ENCODE measurements at regions of chr2 and their contacts with region 1.

Region 1: DNA sequence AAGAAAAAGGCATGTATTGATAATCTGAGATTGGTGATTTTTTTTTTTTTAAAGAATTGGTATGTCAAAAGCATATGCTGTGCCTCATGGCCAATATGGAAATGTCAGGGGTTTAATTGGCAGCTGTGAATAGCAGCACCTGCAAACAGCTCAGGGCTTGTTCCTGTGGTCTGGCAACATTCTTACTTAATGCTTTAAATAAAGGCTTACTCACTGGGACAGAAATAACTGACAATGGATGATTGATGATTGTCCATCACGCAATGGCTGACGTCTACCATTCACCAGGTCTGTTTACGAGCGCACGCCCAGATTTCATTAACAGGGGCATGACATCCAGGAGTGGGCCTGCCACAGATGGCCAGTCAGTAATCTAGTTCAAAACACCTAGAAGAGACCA is 66.7 kb downstream of the ETAA1 start:
- DNase-seq: peak in 1 of 2 donors; percentile 78
- H3K4me3 ChIP-seq: no peak overlapping the region
- H3K27ac ChIP-seq: no peak overlapping the region
- H3K4me1 ChIP-seq: no peaks in the 10 kb centered on the region
- H3K27me3 ChIP-seq: no peaks in the 10 kb centered on the region
- CTCF ChIP-seq: no peak
- EP300 ChIP-seq: no peak
- POLR2A ChIP-seq: no peak

Region 2: GRCh38 chr2:67544286-67544685 is 80.5 kb after region 1 on chr2:
- intact Hi-C with region 1: loop called (anchors 5 kb)
- DNase-seq: no peak
- H3K4me3 ChIP-seq: no peak overlapping the region
- H3K27ac ChIP-seq: no peak overlapping the region
- H3K4me1 ChIP-seq: no peaks in the 10 kb centered on the region
- H3K27me3 ChIP-seq: no peaks in the 10 kb centered on the region
- CTCF ChIP-seq: no peak
- EP300 ChIP-seq: no peak
- POLR2A ChIP-seq: no peak

Region 3: GRCh38 chr2:67752969-67753368 is 289.2 kb after region 1 on chr2:
- intact Hi-C with region 1: no loop called
- DNase-seq: peak in 1 of 2 donors; percentile 44
- H3K4me3 ChIP-seq: no peak overlapping the region
- H3K27ac ChIP-seq: no peak overlapping the region
- H3K4me1 ChIP-seq: no peaks in the 10 kb centered on the region
- H3K27me3 ChIP-seq: no peaks in the 10 kb centered on the region
- CTCF ChIP-seq: no peak
- EP300 ChIP-seq: no peak
- POLR2A ChIP-seq: no peak

Region 4: DNA sequence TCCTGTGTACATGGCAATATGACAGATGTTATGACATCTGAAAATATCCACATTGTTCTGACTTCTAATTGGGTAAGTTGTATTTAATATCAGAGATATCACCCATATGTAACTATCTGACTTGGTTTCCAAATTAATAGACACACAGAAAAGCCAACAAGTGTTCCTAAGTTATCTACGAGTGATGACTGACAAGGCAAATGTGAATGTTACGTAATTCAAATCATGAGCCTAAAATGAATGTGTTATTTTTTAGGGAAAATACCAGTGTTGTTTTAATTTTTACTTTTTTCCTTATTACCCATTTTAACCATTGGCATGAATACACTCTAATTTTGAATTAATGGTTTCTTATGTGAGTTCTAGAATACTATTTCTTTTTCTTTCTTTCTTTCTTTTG is 678.1 kb after region 1 on chr2:
- intact Hi-C with region 1: no loop called
- DNase-seq: no peak
- H3K4me3 ChIP-seq: no peak overlapping the region
- H3K27ac ChIP-seq: no peak overlapping the region
- H3K4me1 ChIP-seq: no peaks in the 10 kb centered on the region
- H3K27me3 ChIP-seq: no peaks in the 10 kb centered on the region
- CTCF ChIP-seq: no peak
- EP300 ChIP-seq: no peak
- POLR2A ChIP-seq: no peak